Caco-2 (cell line): ENCODE measurements at regions of chr22 and their contacts with region 1.

Region 1: DNA sequence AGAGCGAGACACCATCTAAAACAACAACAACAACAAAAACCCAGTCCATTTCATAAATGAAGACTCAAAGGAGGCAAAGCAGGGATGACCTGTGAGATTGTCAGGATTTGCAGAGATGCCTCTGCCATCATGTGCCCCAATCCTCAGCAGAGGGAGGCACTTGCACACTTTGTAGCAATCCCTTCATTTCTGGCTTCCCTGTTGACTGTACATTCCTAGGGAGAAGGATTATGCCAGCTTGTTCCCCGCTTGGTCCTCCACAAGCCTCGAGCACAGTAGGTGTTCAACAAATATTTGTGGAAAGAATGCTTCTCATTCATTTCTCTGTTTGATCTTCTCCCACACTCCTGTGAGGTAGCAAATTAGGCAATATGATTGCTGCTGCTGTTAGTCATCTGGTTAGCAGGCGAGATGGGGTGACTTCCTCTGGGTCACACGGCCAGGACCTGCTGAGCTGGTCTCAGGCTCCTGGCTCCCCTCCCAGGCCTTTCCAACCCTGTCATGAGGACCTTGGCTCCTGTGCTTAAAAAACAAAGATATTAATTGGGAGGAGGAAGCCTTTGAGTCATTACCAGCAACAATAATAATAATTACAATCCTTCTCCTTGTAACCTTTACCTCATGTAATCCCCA is 34.1 kb downstream of the LIF start:
- DNase-seq: peak; percentile 88 to 89
- H3K4me3 ChIP-seq: no peak overlapping the region
- H3K4me3 Mint-ChIP-seq: no peak overlapping the region
- H3K27ac Mint-ChIP-seq: peak overlapping the region; percentile 97
- H3K4me1 ChIP-seq: peaks cover 70% of the 10 kb centered on the region
- H3K4me1 Mint-ChIP-seq: peaks cover 56% of the 10 kb centered on the region
- H3K27me3 ChIP-seq: no peaks in the 10 kb centered on the region
- H3K27me3 Mint-ChIP-seq: no peaks in the 10 kb centered on the region
- CTCF ChIP-seq: no peak

Region 2: GRCh38 chr22:30104501-30105156 is 107.8 kb before region 1 on chr22:
- CTCF ChIA-PET with region 1: no interaction called
- POLR2A ChIA-PET with region 1: no interaction called
- intact Hi-C with region 1: loop called (anchors 2 kb)
- DNase-seq: no peak
- H3K4me3 ChIP-seq: no peak overlapping the region
- H3K4me3 Mint-ChIP-seq: no peak overlapping the region
- H3K27ac Mint-ChIP-seq: no peak overlapping the region
- H3K4me1 ChIP-seq: no peaks in the 10 kb centered on the region
- H3K4me1 Mint-ChIP-seq: peaks cover 11% of the 10 kb centered on the region
- H3K27me3 ChIP-seq: no peaks in the 10 kb centered on the region
- H3K27me3 Mint-ChIP-seq: no peaks in the 10 kb centered on the region
- CTCF ChIP-seq: no peak

Region 3: GRCh38 chr22:30140414-30140813 is 72.1 kb before region 1 on chr22:
- CTCF ChIA-PET with region 1: no interaction called
- POLR2A ChIA-PET with region 1: no interaction called
- intact Hi-C with region 1: no loop called
- DNase-seq: no peak
- H3K4me3 ChIP-seq: no peak overlapping the region
- H3K4me3 Mint-ChIP-seq: no peak overlapping the region
- H3K27ac Mint-ChIP-seq: no peak overlapping the region
- H3K4me1 ChIP-seq: no peaks in the 10 kb centered on the region
- H3K4me1 Mint-ChIP-seq: no peaks in the 10 kb centered on the region
- H3K27me3 ChIP-seq: no peaks in the 10 kb centered on the region
- H3K27me3 Mint-ChIP-seq: no peaks in the 10 kb centered on the region
- CTCF ChIP-seq: no peak

Region 4: DNA sequence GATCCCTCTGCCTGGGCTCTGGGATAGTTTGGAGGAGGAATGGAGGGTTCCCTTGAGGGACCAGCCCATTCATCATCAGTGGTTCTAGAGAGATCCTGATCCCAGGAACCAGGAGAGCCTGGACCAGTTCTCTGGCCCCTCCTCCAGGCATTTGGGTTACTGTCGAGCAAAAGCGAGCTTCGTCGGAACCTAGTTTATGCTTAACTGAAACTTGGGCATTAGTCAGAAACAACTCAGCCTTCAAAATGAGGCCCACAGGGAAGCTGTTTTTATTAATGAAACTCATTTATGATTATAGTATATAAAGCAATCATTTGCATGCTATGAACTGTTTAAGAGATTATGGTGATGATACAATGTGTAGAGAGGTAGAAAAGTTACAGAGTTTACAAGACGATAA is 27.4 kb before region 1 on chr22:
- CTCF ChIA-PET with region 1: no interaction called
- POLR2A ChIA-PET with region 1: no interaction called
- intact Hi-C with region 1: no loop called
- DNase-seq: no peak
- H3K4me3 ChIP-seq: no peak overlapping the region
- H3K4me3 Mint-ChIP-seq: no peak overlapping the region
- H3K27ac Mint-ChIP-seq: no peak overlapping the region
- H3K4me1 ChIP-seq: peaks cover 11% of the 10 kb centered on the region
- H3K4me1 Mint-ChIP-seq: peaks cover 4% of the 10 kb centered on the region
- H3K27me3 ChIP-seq: no peaks in the 10 kb centered on the region
- H3K27me3 Mint-ChIP-seq: no peaks in the 10 kb centered on the region
- CTCF ChIP-seq: no peak

Region 5: GRCh38 chr22:30196141-30196879 is 16.2 kb before region 1 on chr22:
- CTCF ChIA-PET with region 1: no interaction called
- POLR2A ChIA-PET with region 1: interaction called, 5 read pairs
- intact Hi-C with region 1: loop called (anchors 1 kb)
- DNase-seq: peak; percentile 84 to 90
- H3K4me3 ChIP-seq: peak overlapping the region; percentile 16
- H3K4me3 Mint-ChIP-seq: peak overlapping the region; percentile 67
- H3K27ac Mint-ChIP-seq: peak overlapping the region; percentile 93
- H3K4me1 ChIP-seq: peaks cover 25% of the 10 kb centered on the region
- H3K4me1 Mint-ChIP-seq: peaks cover 12% of the 10 kb centered on the region
- H3K27me3 ChIP-seq: no peaks in the 10 kb centered on the region
- H3K27me3 Mint-ChIP-seq: no peaks in the 10 kb centered on the region
- CTCF ChIP-seq: no peak

Region 6: DNA sequence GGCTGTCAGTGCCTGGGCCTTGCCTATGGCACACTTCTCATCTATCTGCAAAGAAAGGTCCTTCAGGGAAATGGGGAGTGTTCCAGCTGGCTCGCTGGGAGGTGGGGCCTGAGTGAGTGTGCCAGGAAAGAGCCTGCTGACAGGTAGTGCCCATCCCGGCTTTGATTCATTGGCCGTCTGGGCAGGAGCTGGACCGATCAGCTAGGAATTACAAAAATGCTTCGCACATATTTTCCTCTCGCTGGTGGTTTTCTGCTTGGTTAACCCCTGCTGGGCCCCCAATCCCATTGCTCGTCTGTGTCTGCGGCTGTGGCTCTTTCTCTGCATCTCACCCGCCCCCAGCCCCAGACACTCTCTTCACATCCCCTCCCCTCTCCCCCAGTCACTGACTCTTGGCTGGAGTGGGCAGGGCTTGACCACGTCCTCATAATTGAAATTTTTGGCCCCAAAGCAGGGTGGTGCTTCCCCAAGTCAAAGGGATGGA is 23.2 kb after region 1 on chr22:
- CTCF ChIA-PET with region 1: no interaction called
- POLR2A ChIA-PET with region 1: interaction called, 9 read pairs
- intact Hi-C with region 1: loop called (anchors 2 kb)
- DNase-seq: peak; percentile 58 to 64
- H3K4me3 ChIP-seq: no peak overlapping the region
- H3K4me3 Mint-ChIP-seq: no peak overlapping the region
- H3K27ac Mint-ChIP-seq: peak overlapping the region; percentile 53
- H3K4me1 ChIP-seq: peaks cover 52% of the 10 kb centered on the region
- H3K4me1 Mint-ChIP-seq: peaks cover 30% of the 10 kb centered on the region
- H3K27me3 ChIP-seq: no peaks in the 10 kb centered on the region
- H3K27me3 Mint-ChIP-seq: no peaks in the 10 kb centered on the region
- CTCF ChIP-seq: no peak